Stomach (tissue), 19 donors: ENCODE measurements at regions of chr11 and their contacts with region 1.

Region 1: GRCh38 chr11:6531267-6531752 is 34.2 kb downstream of the DNHD1 start:
- DNase-seq: peak in 1 of 2 donors; percentile 78
- H3K4me3 ChIP-seq: no peak overlapping the region
- H3K27ac ChIP-seq: no peak overlapping the region
- H3K4me1 ChIP-seq: peaks cover 0 to 4% (median 0%) of the 10 kb centered on the region in 4 donors
- H3K27me3 ChIP-seq: no peaks in the 10 kb centered on the region
- CTCF ChIP-seq: peak in 5 of 7 experiments; percentile 50 to 91 (median 68)
- EP300 ChIP-seq: no peak
- POLR2A ChIP-seq: no peak

Region 2: DNA sequence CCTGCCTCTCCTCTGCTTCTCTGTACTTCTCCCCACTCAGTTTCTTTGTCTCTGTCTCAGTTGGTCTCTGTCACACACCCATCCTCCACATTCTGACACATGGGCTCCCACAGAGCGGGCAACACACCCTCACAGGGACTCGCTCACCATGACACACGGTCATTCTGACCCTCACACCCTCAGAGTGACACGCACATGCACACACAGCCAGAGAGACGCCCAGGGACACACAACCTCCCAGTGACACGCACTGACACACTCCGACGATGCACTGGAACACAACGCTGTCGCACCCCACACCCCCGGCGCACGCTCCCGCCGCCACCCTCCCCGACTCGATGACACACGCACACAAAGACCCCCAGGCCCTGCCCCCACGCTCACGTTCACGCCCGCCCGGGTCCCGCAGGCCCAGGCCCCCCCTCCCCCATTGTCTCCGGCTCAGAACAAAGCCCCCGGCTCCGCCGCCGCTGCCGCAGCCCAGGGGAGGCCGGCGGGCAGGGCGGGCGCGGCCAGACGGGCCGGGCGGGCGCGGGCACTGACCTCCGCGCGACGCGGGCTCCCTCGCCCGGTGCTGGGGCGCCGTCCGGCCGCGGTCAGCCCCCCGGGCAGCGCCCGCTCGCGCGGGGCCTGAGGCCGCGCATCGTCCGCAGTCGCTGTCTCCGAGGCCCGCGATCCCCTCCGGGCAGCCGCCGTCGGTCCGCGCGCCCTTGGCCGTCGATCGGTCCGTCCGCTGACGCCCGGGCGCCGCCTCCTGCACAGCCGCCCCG is 123.9 kb after region 1 on chr11:
- intact Hi-C with region 1: no loop called
- DNase-seq: peak in 1 of 2 donors; percentile 75
- H3K4me3 ChIP-seq: peak overlapping the region; percentile 46 to 54 (median 50)
- H3K27ac ChIP-seq: peak overlapping the region; percentile 52 to 87 (median 73)
- H3K4me1 ChIP-seq: peaks cover 0 to 33% (median 14%) of the 10 kb centered on the region in 4 donors
- H3K27me3 ChIP-seq: peaks cover 0 to 25% (median 12%) of the 10 kb centered on the region in 3 donors
- CTCF ChIP-seq: no peak
- EP300 ChIP-seq: no peak
- POLR2A ChIP-seq: no peak

Region 3: GRCh38 chr11:6674862-6675261 is 143.6 kb after region 1 on chr11:
- intact Hi-C with region 1: loop called (anchors 10 kb)
- DNase-seq: no peak
- H3K4me3 ChIP-seq: no peak overlapping the region
- H3K27ac ChIP-seq: no peak overlapping the region
- H3K4me1 ChIP-seq: no peaks in the 10 kb centered on the region
- H3K27me3 ChIP-seq: no peaks in the 10 kb centered on the region
- CTCF ChIP-seq: no peak
- EP300 ChIP-seq: no peak
- POLR2A ChIP-seq: no peak

Region 4: DNA sequence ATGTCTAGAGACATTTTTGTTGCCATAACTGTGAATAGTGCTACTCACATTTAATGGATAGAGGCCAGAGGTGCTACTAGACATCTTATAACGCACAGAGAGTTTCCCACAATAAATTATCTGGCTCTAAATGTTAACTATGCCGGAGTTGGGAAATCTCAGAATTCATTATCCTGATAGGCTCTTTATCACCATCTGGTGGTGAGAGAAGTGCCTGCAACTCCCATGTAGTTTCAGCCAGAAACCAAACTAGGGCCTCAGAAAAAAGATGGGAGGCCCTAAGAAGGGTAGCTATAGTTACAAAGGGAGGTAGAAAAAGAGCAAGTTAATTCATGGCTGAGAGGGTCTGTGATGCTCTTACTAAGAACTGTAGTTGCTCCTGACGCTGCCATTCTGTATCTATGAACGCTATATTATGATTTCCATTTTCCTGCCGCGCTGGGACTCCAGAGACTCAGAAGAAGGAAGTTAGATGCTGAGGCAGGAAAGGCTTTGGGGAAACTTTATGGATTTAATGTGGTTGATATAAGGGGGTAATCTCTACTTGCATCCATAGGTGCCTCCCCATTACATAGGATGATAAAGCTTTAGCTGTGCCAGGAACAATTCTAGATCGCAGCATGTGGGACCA is 174.7 kb after region 1 on chr11:
- intact Hi-C with region 1: loop called (anchors 10 kb)
- DNase-seq: peak; percentile 54 to 85
- H3K4me3 ChIP-seq: no peak overlapping the region
- H3K27ac ChIP-seq: no peak overlapping the region
- H3K4me1 ChIP-seq: peaks cover 0 to 24% (median 3%) of the 10 kb centered on the region in 4 donors
- H3K27me3 ChIP-seq: no peaks in the 10 kb centered on the region
- CTCF ChIP-seq: peak in 5 of 7 experiments; percentile 56 to 91 (median 84)
- EP300 ChIP-seq: no peak
- POLR2A ChIP-seq: no peak